Sigmoid colon (tissue), 7 donors: ENCODE measurements at regions of chr3 and their contacts with region 1.

Region 1: DNA sequence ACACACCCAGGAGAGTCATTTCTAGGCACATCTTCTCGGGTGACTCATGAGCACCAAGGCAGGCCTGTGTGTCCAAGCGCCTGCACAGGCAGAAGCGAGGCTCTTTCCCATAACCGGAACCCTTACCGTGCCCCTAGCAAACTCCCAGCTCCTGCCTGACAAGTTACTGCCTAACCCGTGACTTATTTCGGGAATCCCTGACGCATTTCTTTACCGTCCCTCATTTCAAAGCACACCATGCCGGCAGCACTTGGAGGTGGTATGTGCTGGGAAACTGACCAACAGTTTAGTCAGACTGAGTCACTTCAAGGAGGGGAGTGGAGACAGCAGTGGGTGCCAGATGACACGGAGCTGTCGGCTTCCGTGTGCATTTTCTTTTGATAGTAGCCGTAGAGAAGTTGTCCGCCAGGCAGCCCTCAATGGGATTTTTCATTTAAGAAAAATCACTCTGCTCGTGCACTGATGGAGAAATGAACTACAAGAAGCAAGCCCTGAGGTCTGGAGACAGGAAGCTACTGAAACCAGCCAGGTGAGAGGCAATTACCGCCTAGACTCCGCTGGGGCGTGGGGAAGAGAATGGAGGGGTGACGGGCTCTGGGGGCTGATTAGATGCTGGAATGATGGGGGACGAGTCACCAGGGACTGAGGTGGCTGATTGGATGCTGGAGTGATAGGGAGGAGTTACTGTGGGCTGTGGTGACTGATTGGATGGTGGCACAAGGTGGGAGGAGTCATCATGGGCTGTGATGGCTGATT is 17.2 kb upstream of the HRH1 start:
- DNase-seq: peak; percentile 92
- H3K4me3 ChIP-seq: peak overlapping the region in 3 of 4 donors; percentile 31 to 38 (median 37)
- H3K27ac ChIP-seq: peak overlapping the region; percentile 79 to 88 (median 86)
- H3K4me1 ChIP-seq: peaks cover 0 to 27% (median 10%) of the 10 kb centered on the region in 4 donors
- H3K27me3 ChIP-seq: no peaks in the 10 kb centered on the region
- CTCF ChIP-seq: peak in 1 of 4 experiments; percentile 11
- EP300 ChIP-seq: peak; percentile 74 to 99 (median 88)
- POLR2A ChIP-seq: no peak

Region 2: DNA sequence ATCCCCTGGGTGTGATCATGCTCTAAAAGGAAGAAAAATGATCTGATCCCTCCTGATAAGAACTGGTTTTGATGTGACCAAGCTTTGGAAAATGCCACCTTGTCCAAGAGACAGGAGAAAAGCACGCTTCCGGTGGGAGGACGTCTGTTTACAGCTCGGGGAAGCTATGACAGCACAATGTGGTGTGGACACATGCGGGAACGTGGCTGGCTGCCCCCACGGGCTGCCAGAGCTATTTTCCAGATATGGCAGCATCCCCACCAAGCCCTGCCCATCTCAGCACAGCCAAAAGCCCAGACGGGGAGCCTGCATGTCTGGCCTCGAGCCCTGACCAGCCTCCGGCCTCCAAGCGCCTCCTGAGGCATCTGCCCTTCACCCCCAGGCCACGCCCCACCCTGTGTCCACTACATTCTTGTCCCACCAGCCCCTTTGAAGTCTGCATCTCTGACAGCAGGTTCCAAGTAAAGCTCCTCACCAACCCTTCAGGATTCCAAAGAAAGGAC is 45.9 kb before region 1 on chr3:
- intact Hi-C with region 1: loop called (anchors 1 kb)
- DNase-seq: peak; percentile 82
- H3K4me3 ChIP-seq: no peak overlapping the region
- H3K27ac ChIP-seq: peak overlapping the region; percentile 32 to 80 (median 66)
- H3K4me1 ChIP-seq: peaks cover 0 to 44% (median 30%) of the 10 kb centered on the region in 4 donors
- H3K27me3 ChIP-seq: no peaks in the 10 kb centered on the region
- CTCF ChIP-seq: no peak
- EP300 ChIP-seq: peak in 2 of 4 donors; percentile 19 to 36
- POLR2A ChIP-seq: no peak